ENCODE measurements at regions of chr13 and their contacts with region 1.

Region 1: GRCh38 chr13:76189882-76190519 is 553.9 kb downstream of the LMO7 start:
- DNase-seq: peak in 1 of 35 experiments; percentile 0
- ATAC-seq: no peak
- H3K4me3 ChIP-seq: no peak overlapping the region
- H3K4me3 Mint-ChIP-seq: no peak overlapping the region
- H3K27ac ChIP-seq: no peak overlapping the region
- H3K27ac Mint-ChIP-seq: no peak overlapping the region
- H3K4me1 ChIP-seq: no peaks in the 10 kb centered on the region
- H3K4me1 Mint-ChIP-seq: no peaks in the 10 kb centered on the region
- H3K27me3 ChIP-seq: no peaks in the 10 kb centered on the region
- H3K27me3 Mint-ChIP-seq: peaks cover 0 to 2% of the 10 kb centered on the region in 2 donors

Region 2: GRCh38 chr13:76210262-76210661 is 20.3 kb after region 1 on chr13:
- CTCF ChIA-PET with region 1: interaction called in 1 of 2 experiments, 13 read pairs
- POLR2A ChIA-PET with region 1: no interaction called
- DNase-seq: no peak
- ATAC-seq: no peak
- H3K4me3 ChIP-seq: no peak overlapping the region
- H3K4me3 Mint-ChIP-seq: no peak overlapping the region
- H3K27ac ChIP-seq: no peak overlapping the region
- H3K27ac Mint-ChIP-seq: no peak overlapping the region
- H3K4me1 ChIP-seq: no peaks in the 10 kb centered on the region
- H3K4me1 Mint-ChIP-seq: no peaks in the 10 kb centered on the region
- H3K27me3 ChIP-seq: no peaks in the 10 kb centered on the region
- H3K27me3 Mint-ChIP-seq: no peaks in the 10 kb centered on the region

Region 3: DNA sequence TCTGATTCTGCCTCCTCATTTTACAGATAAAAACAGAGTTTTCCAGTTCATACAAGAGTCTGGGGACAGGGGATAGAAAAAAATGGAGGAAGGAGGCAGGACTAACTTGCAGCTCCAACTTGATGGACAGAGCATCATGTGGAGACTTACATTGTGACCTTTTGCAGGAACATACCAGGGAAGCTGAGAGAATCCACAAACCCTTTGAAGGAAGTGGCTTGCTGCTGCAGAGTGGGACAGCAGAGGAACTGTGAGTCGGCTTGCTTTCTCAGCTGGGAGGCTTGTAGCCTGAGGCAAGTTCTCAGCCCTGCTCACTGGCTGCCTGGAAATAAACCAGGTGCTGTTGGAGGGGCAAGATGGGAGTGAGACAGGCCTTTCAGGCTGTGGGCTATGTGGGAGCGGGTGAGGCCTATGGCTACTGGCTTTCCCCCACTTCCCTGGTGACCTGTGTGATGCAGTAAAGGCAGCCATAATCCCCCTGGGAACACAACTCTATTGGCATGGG is 81.8 kb after region 1 on chr13:
- CTCF ChIA-PET with region 1: no interaction called
- POLR2A ChIA-PET with region 1: no interaction called
- DNase-seq: no peak
- ATAC-seq: no peak
- H3K4me3 ChIP-seq: no peak overlapping the region
- H3K4me3 Mint-ChIP-seq: no peak overlapping the region
- H3K27ac ChIP-seq: no peak overlapping the region
- H3K27ac Mint-ChIP-seq: no peak overlapping the region
- H3K4me1 ChIP-seq: no peaks in the 10 kb centered on the region
- H3K4me1 Mint-ChIP-seq: no peaks in the 10 kb centered on the region
- H3K27me3 ChIP-seq: peaks cover 0 to 3% of the 10 kb centered on the region in 2 experiments
- H3K27me3 Mint-ChIP-seq: peaks cover 0 to 4% of the 10 kb centered on the region in 2 donors

Measured in T-cell (primary cell).